Panc1 (cell line): ENCODE measurements at regions of chr2 and their contacts with region 1.

Region 1: DNA sequence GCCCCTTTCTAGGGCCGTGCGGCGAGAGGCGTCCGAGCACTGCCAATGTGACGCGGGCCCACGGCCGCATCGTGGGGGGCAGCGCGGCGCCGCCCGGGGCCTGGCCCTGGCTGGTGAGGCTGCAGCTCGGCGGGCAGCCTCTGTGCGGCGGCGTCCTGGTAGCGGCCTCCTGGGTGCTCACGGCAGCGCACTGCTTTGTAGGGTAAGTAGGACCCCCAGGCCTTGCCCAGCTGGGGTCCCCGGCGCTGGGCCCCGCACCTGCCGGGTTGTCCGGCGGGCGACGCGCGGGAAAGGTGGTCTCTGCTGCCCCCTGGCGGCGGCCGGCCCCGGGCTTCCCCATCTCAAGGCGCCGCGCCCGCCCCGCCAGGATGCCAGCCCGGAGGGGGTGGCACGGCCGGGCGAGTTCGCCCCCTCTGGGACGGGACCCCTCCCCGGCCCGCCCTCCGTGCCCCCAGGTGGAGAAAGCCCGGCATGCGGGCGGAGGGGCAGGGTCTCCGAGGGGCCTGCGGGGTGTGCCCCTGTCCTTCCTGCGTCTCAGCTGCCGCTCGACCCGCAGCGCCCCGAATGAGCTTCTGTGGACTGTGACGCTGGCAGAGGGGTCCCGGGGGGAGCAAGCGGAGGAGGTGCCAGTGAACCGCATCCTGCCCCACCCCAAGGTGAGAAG is 1.9 kb downstream of the PRSS56 start:
- DNase-seq: no peak
- ATAC-seq: peak; percentile 58
- H3K4me3 ChIP-seq: 0 out of 4 replicates have a peak overlapping the region, but pooled peaks of 1 of the 2 experiments have one; percentile 11
- H3K27ac ChIP-seq: no peak overlapping the region
- H3K4me1 ChIP-seq: peaks cover 6% of the 10 kb centered on the region; the same call in 1 of the 2 replicates
- H3K27me3 ChIP-seq: no peaks in the 10 kb centered on the region
- CTCF ChIP-seq: peak; percentile 96

Region 2: DNA sequence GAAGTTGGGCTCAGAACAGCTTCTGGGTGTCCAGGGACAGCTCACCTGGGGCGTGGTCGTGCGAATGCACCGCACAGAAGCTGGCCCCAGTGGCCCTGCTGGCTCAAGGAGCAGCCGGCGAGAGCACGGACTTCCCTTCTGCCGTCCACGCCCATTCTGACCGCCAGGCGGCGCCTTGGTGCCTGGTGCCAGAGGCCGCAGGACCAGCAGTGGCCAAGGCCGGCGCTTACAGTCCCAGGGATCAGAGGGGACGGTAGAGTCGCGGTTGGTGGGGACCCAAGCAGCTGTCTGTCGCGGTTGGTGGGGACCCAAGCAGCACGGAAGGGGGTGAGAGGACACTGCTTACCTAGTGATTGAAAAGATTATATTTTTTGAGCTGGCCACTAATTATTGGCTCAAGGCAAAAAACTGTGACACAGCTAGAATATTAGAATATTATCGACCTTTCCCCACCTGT is 621.6 kb before region 1 on chr2:
- CTCF ChIA-PET with region 1: no interaction called
- POLR2A ChIA-PET with region 1: no interaction called
- in situ Hi-C with region 1: no loop called
- intact Hi-C with region 1: loop called (anchors 10 kb)
- DNase-seq: peak; percentile 35
- ATAC-seq: peak; percentile 99
- H3K4me3 ChIP-seq: no peak overlapping the region
- H3K27ac ChIP-seq: no peak overlapping the region
- H3K4me1 ChIP-seq: 0 out of 2 replicates have a peak, but pooled peaks cover 6% of the 10 kb centered on the region
- H3K27me3 ChIP-seq: no peaks in the 10 kb centered on the region
- CTCF ChIP-seq: peak; percentile 99

Region 3: GRCh38 chr2:232348936-232349335 is 173.2 kb before region 1 on chr2:
- CTCF ChIA-PET with region 1: no interaction called
- POLR2A ChIA-PET with region 1: no interaction called
- in situ Hi-C with region 1: no loop called
- intact Hi-C with region 1: loop called (anchors 10 kb)
- DNase-seq: no peak
- ATAC-seq: no peak
- H3K4me3 ChIP-seq: no peak overlapping the region
- H3K27ac ChIP-seq: no peak overlapping the region
- H3K4me1 ChIP-seq: no peaks in the 10 kb centered on the region
- H3K27me3 ChIP-seq: peaks cover 2% of the 10 kb centered on the region; the same call in 1 of the 2 replicates
- CTCF ChIP-seq: no peak

Region 4: GRCh38 chr2:232444409-232445148 is 77.5 kb before region 1 on chr2:
- CTCF ChIA-PET with region 1: interaction called, 16 read pairs
- POLR2A ChIA-PET with region 1: no interaction called
- in situ Hi-C with region 1: no loop called
- intact Hi-C with region 1: loop called (anchors 2 kb)
- DNase-seq: peak; percentile 27
- ATAC-seq: peak; percentile 48
- H3K4me3 ChIP-seq: no peak overlapping the region
- H3K27ac ChIP-seq: no peak overlapping the region; the same call in 1 of the 2 replicates
- H3K4me1 ChIP-seq: no peaks in the 10 kb centered on the region; the same call in none of the 2 replicates
- H3K27me3 ChIP-seq: no peaks in the 10 kb centered on the region
- CTCF ChIP-seq: peak; percentile 86

Region 5: GRCh38 chr2:233600386-233600785 is 1078.3 kb after region 1 on chr2:
- CTCF ChIA-PET with region 1: no interaction called
- POLR2A ChIA-PET with region 1: no interaction called
- in situ Hi-C with region 1: no loop called
- intact Hi-C with region 1: no loop called
- DNase-seq: no peak
- ATAC-seq: no peak
- H3K4me3 ChIP-seq: no peak overlapping the region
- H3K27ac ChIP-seq: no peak overlapping the region
- H3K4me1 ChIP-seq: no peaks in the 10 kb centered on the region
- H3K27me3 ChIP-seq: peaks cover 4% of the 10 kb centered on the region
- CTCF ChIP-seq: no peak